ENCODE measurements at regions of chr1 and their contacts with region 1.

Region 1: DNA sequence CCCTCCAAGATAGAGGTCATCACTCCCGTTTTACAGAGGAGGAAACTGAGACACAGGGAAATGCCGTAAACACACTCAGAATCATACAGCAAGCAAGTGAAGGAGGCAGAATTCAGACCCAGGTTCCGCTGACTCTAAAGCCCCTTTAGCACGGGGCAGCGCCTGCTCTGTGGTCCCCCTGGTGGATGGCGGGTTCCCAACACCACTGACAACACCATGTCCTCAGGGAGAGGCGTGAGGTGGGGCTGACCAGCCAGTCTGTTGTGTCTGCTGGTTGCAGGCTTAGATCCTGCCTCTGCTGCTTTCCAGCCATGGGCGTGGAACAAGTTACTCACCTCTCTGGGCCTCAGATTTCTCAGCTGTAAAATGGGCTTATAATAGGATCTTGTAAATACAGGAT is 617.3 kb downstream of the MATN1 start:
- DNase-seq: peak; percentile 21
- ATAC-seq: no peak
- H3K4me3 Mint-ChIP-seq: no peak overlapping the region
- H3K27ac Mint-ChIP-seq: no peak overlapping the region
- H3K4me1 Mint-ChIP-seq: no peaks in the 10 kb centered on the region
- H3K27me3 Mint-ChIP-seq: peaks cover 5% of the 10 kb centered on the region
- CTCF ChIP-seq: no peak

Region 2: GRCh38 chr1:29793101-29793546 is 313.0 kb before region 1 on chr1:
- CTCF ChIA-PET with region 1: no interaction called
- POLR2A ChIA-PET with region 1: no interaction called
- intact Hi-C with region 1: loop called (anchors 10 kb)
- DNase-seq: peak; percentile 83
- ATAC-seq: peak; percentile 75
- H3K4me3 Mint-ChIP-seq: no peak overlapping the region
- H3K27ac Mint-ChIP-seq: no peak overlapping the region
- H3K4me1 Mint-ChIP-seq: no peaks in the 10 kb centered on the region
- H3K27me3 Mint-ChIP-seq: no peaks in the 10 kb centered on the region
- CTCF ChIP-seq: peak; percentile 75

Region 3: DNA sequence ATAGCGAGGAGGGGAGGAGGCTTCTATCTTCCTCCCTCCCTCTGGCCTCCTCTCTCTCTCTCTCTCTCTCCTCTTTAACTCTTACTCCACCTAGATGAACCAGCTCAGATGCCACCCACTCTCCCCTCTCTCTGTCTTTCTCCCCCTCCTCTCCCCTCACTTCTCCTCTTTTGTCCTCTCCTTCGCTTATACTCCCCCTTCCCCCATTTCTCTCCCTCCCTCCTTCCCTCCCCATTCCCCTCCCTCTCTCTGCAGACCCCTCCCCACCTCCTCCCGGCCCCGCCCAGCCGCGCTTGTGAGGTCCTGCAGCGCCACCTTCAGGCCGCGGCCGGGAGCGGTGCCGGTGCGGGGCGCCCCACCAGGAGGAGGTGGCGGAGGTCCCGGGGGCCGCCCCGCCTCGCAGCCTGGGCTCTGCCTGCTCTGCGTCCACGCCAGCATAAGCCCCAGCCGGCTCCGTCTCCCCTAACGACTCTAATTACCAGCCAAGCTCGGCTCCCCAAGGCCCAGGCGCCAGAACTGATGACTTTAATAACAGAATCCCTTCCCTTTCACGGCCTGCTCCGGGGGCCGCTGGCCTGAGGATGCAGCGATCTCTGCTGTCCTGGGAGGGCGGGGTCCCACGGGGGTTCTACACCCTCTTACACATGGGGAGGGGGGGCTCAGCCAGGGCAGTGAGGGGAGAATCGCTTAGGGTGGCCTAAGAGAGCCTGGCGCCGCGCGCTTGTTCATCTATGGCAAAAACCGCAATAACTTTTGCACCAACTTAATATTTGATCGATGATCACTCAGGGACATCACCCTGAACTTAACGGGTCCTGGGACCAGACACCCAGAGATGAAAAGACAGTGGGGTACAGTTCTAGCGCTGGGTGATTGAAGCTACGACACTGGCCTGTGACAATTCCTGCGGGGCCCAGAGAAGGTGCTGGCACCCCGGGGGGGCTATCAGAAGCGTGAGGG is 20.0 kb before region 1 on chr1:
- CTCF ChIA-PET with region 1: no interaction called
- POLR2A ChIA-PET with region 1: no interaction called
- intact Hi-C with region 1: no loop called
- DNase-seq: peak; percentile 61
- ATAC-seq: peak; percentile 45
- H3K4me3 Mint-ChIP-seq: no peak overlapping the region
- H3K27ac Mint-ChIP-seq: no peak overlapping the region
- H3K4me1 Mint-ChIP-seq: no peaks in the 10 kb centered on the region
- H3K27me3 Mint-ChIP-seq: peaks cover 30% of the 10 kb centered on the region
- CTCF ChIP-seq: peak; percentile 70

Region 4: GRCh38 chr1:30166174-30166573 is 60.0 kb after region 1 on chr1:
- CTCF ChIA-PET with region 1: no interaction called
- POLR2A ChIA-PET with region 1: no interaction called
- intact Hi-C with region 1: no loop called
- DNase-seq: no peak
- ATAC-seq: no peak
- H3K4me3 Mint-ChIP-seq: no peak overlapping the region
- H3K27ac Mint-ChIP-seq: no peak overlapping the region
- H3K4me1 Mint-ChIP-seq: no peaks in the 10 kb centered on the region
- H3K27me3 Mint-ChIP-seq: peaks cover 3% of the 10 kb centered on the region
- CTCF ChIP-seq: no peak